ENCODE measurements at regions of chr2 and their contacts with region 1.

Region 1: GRCh38 chr2:61632276-61633169 is 94.4 kb upstream of the XPO1 start:
- DNase-seq: no peak
- ATAC-seq: no peak
- H3K4me3 ChIP-seq: no peak overlapping the region
- H3K27ac ChIP-seq: no peak overlapping the region
- H3K4me1 ChIP-seq: peaks cover 8% of the 10 kb centered on the region
- H3K27me3 ChIP-seq: no peaks in the 10 kb centered on the region
- CTCF ChIP-seq: no peak

Region 2: GRCh38 chr2:61135510-61135909 is 497.0 kb before region 1 on chr2:
- CTCF ChIA-PET with region 1: interaction called, 4 read pairs
- POLR2A ChIA-PET with region 1: no interaction called
- intact Hi-C with region 1: loop called (anchors 2 kb)
- DNase-seq: peak; percentile 52
- ATAC-seq: peak; percentile 88
- H3K4me3 ChIP-seq: no peak overlapping the region
- H3K27ac ChIP-seq: no peak overlapping the region
- H3K4me1 ChIP-seq: no peaks in the 10 kb centered on the region
- H3K27me3 ChIP-seq: no peaks in the 10 kb centered on the region
- CTCF ChIP-seq: peak; percentile 66

Region 3: GRCh38 chr2:61485281-61485680 is 147.2 kb before region 1 on chr2:
- CTCF ChIA-PET with region 1: no interaction called
- POLR2A ChIA-PET with region 1: no interaction called
- intact Hi-C with region 1: loop called (anchors 10 kb)
- DNase-seq: no peak
- ATAC-seq: no peak
- H3K4me3 ChIP-seq: no peak overlapping the region
- H3K27ac ChIP-seq: no peak overlapping the region
- H3K4me1 ChIP-seq: no peaks in the 10 kb centered on the region
- H3K27me3 ChIP-seq: no peaks in the 10 kb centered on the region
- CTCF ChIP-seq: no peak

Measured in PC-3 (cell line).